Activated T-helper 1 cell treated with anti-CD3 and anti-CD28 coated beads, Interleukin-12 subunit alpha, Interleukin-12 subunit beta, Interleukin-2, Interleukin-4 antibody, amounts not matched to agents 30 ng/mL and 10 ng/mL and 1 ng/mL, durations not matched to agents 14 hours and 24 hours and 36 hours (primary cell): ENCODE measurements at regions of chr7 and their contacts with region 1.

Region 1: GRCh38 chr7:50696810-50697582 is 85.7 kb downstream of the GRB10 start:
- DNase-seq: no peak
- H3K4me3 Mint-ChIP-seq: no peak overlapping the region
- H3K27ac Mint-ChIP-seq: no peak overlapping the region
- H3K4me1 Mint-ChIP-seq: peaks cover 4% of the 10 kb centered on the region
- H3K27me3 Mint-ChIP-seq: peaks cover 5% of the 10 kb centered on the region

Region 2: GRCh38 chr7:50953820-50954219 is 256.8 kb after region 1 on chr7:
- intact Hi-C with region 1: no loop called
- DNase-seq: no peak
- H3K4me3 Mint-ChIP-seq: no peak overlapping the region
- H3K27ac Mint-ChIP-seq: no peak overlapping the region
- H3K4me1 Mint-ChIP-seq: no peaks in the 10 kb centered on the region
- H3K27me3 Mint-ChIP-seq: peaks cover 6% of the 10 kb centered on the region

Region 3: DNA sequence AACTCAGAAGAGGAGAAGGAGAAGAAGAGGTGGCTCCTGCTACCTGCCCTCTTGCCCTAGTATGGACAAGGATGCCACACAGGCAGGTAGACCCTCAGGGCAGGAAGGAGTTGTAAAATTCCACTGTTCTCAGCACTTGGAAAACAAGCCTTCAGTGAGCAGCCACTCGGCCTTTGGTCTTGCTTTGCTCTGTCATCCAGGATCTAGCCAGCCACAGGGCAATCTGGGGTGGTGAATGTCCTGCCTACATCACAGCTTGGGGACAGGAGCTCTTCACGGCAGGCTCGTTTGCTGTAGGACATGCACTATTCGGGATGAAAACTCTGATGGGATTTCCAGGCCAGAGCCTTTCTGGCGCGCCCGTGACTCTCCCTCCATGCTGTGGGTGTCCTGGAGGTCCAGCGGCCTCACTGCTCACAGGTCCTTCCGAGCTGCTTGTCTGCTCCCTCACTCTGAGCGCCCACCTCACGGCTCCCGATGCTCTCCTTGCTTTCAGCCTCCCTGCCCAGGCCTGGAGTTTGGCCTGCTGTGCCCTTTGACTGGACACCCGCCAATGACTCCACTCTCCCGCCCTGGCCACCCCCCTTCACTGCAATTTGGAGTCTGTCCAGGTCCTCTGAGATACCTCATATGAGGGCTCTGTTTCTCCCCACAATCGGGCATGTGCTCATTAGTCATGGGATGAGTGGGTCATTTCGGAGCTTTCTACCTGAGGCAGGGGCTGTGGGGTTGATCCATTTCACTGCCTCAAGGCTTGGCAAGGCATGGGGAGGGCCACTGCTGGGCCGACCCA is 312.9 kb after region 1 on chr7:
- intact Hi-C with region 1: loop called (anchors 10 kb)
- DNase-seq: no peak
- H3K4me3 Mint-ChIP-seq: no peak overlapping the region
- H3K27ac Mint-ChIP-seq: no peak overlapping the region
- H3K4me1 Mint-ChIP-seq: no peaks in the 10 kb centered on the region
- H3K27me3 Mint-ChIP-seq: no peaks in the 10 kb centered on the region

Region 4: DNA sequence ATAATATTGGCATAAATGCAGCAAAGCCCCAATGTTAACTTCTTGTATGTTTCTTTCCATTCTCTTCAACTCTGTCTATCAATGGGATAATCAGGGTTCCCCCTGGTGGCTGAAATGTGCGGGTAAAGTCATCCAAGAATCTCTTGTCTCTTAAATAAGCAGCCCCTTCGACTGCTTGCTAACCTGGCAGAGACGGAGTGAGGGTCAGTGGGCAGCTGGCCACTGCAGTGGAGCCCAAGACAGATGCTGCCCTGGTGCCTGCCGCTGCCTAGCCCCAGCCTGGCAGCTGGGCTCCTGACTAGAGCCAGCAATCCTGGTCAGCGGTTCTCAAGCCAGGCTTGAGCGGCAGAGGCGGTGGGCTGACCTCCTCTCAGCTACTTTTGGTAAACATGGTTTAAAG is 370.8 kb after region 1 on chr7:
- intact Hi-C with region 1: loop called (anchors 10 kb)
- DNase-seq: peak; percentile 17
- H3K4me3 Mint-ChIP-seq: no peak overlapping the region
- H3K27ac Mint-ChIP-seq: no peak overlapping the region
- H3K4me1 Mint-ChIP-seq: no peaks in the 10 kb centered on the region
- H3K27me3 Mint-ChIP-seq: peaks cover 5% of the 10 kb centered on the region